Naive thymus-derived CD4-positive, alpha-beta T cell (primary cell): ENCODE measurements at regions of chr17 and their contacts with region 1.

Region 1: GRCh38 chr17:76141212-76142038 is at the start of gene FOXJ1:
- DNase-seq: peak; percentile 88 to 94 (median 91)
- ATAC-seq: peak; percentile 87
- H3K4me3 ChIP-seq: peak within 1 kb of the TSS; percentile 49
- H3K4me3 Mint-ChIP-seq: peak within 1 kb of the TSS; percentile 82 to 89 (median 85)
- H3K27ac ChIP-seq: peak within 1 kb of the TSS; percentile 61
- H3K27ac Mint-ChIP-seq: peak within 1 kb of the TSS; percentile 80 to 99 (median 93)
- H3K4me1 ChIP-seq: peaks cover 50 to 58% of the 10 kb centered on the region in 2 donors
- H3K4me1 Mint-ChIP-seq: peaks cover 42 to 63% (median 59%) of the 10 kb centered on the region in 7 donors
- H3K27me3 ChIP-seq: no peaks in the 10 kb centered on the region
- H3K27me3 Mint-ChIP-seq: peaks cover 0 to 26% (median 0%) of the 10 kb centered on the region in 5 donors
- total RNA-seq, gene FOXJ1: 0.29 to 2.2 (median 1.4) TPM

Region 2: DNA sequence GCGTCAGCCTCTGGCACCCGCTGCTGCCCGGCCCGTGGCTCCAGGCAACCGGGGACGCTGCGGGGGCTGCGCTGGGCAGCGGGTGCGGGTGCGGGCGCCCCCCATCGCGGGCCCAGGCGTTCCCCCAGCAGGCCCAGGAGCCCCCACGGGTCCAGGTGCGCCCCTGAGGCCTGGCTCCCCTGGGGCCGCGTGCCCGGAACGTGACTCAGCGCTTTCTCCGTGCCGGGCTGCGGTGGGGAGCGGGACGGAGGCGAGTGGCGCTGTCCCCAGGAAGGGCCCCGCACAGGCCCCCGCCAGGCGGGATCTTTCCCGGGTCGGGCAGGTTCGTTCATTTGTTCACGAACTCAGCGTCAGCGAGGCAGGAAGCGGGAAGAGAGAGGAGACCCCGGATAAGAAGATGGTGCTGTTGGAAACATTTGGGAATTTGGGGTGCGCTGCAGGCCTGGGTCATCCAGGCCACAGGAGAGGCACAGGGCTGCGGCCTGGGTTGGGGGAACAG is 19.4 kb before region 1 on chr17:
- CTCF ChIA-PET with region 1: interaction called, 5 read pairs
- POLR2A ChIA-PET with region 1: interaction called, 51 read pairs
- intact Hi-C with region 1: loop called in 1 of 2 experiments (anchors 1 kb)
- DNase-seq: no peak
- ATAC-seq: peak; percentile 33
- H3K4me3 ChIP-seq: peak overlapping the region; percentile 63
- H3K4me3 Mint-ChIP-seq: peak overlapping the region in 7 of 10 donors; percentile 25 to 77 (median 53)
- H3K27ac ChIP-seq: peak overlapping the region; percentile 52
- H3K27ac Mint-ChIP-seq: peak overlapping the region; percentile 40 to 91 (median 73)
- H3K4me1 ChIP-seq: peaks cover 0 to 25% of the 10 kb centered on the region in 2 donors
- H3K4me1 Mint-ChIP-seq: peaks cover 10 to 39% (median 27%) of the 10 kb centered on the region in 7 donors
- H3K27me3 ChIP-seq: no peaks in the 10 kb centered on the region
- H3K27me3 Mint-ChIP-seq: no peaks in the 10 kb centered on the region

Region 3: DNA sequence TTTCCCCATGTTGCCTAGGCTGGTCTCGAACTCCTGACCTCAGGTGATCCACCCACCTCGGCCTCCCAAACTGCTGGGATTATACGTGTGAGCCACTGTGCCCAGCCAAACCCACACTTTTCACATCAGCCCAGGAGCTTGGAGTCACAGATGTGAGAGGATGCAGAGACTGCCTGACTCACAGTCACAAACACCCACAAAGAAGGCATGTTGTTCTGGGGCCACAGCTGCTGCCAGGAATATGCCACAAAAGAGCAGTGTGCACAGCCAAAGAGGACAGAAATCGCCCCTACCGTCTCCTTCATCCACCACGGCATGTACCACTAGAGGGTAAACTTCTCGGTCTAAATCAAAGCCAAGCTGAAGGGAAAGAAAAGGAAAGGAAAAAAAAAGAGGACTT is 24.7 kb after region 1 on chr17:
- CTCF ChIA-PET with region 1: interaction called, 4 read pairs
- POLR2A ChIA-PET with region 1: interaction called, 11 read pairs
- intact Hi-C with region 1: no loop called
- DNase-seq: no peak
- ATAC-seq: no peak
- H3K4me3 ChIP-seq: no peak overlapping the region
- H3K4me3 Mint-ChIP-seq: peak overlapping the region in 1 of 10 donors; percentile 30
- H3K27ac ChIP-seq: no peak overlapping the region
- H3K27ac Mint-ChIP-seq: peak overlapping the region in 6 of 9 donors; percentile 14 to 55 (median 39)
- H3K4me1 ChIP-seq: no peaks in the 10 kb centered on the region
- H3K4me1 Mint-ChIP-seq: peaks cover 7 to 36% (median 24%) of the 10 kb centered on the region in 7 donors
- H3K27me3 ChIP-seq: no peaks in the 10 kb centered on the region
- H3K27me3 Mint-ChIP-seq: no peaks in the 10 kb centered on the region

Region 4: DNA sequence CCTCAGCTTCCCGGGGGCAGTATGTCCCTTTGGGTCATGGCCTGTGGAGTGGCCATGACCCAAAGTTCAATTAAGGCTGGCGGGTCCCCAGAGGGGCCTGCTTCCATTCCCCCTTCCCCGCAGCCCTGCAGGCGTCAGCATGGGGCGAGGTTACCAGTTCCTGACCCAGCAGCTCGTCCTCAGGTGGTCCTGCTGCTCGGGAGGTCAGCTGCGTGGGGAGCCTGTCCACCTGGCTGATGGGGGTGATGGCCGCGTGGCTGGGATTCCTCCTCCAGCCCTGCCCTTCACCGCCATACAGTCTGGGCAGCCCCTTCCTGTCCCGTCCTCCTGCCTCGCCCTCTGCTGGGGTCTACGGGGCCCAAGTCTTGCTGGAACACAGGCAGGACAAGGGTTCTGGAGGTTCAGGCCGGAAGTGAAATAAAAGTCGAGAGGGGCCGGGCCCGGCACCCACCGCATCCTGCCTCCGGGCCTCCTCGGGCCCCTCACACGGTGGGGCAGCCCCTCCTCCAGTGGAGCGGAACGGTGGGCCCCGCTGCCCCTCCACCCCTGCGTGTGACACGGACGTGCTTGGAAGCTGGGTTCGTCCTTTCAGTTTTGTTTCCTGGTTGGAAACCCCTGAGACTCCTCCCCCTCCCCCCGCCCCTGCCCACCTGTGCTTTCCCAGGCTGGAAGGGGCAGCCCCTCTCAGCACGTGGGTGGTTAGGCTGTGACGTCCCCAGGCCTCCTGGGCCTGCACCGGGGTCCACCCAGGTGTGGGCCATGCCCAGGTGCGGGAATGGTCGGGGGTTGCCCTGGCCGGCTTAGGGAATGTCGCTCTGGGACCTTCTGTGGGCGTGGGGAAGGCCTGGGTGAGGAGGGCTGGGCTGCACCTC is 130.5 kb after region 1 on chr17:
- CTCF ChIA-PET with region 1: interaction called, 5 read pairs
- POLR2A ChIA-PET with region 1: interaction called, 23 read pairs
- intact Hi-C with region 1: no loop called
- DNase-seq: peak in 6 of 9 donors; percentile 53 to 79 (median 61)
- ATAC-seq: peak; percentile 54
- H3K4me3 ChIP-seq: peak overlapping the region; percentile 68
- H3K4me3 Mint-ChIP-seq: peak overlapping the region; percentile 75 to 93 (median 82)
- H3K27ac ChIP-seq: peak overlapping the region; percentile 92
- H3K27ac Mint-ChIP-seq: peak overlapping the region; percentile 82 to 94 (median 92)
- H3K4me1 ChIP-seq: peaks cover 65 to 70% of the 10 kb centered on the region in 2 donors
- H3K4me1 Mint-ChIP-seq: peaks cover 37 to 75% (median 71%) of the 10 kb centered on the region in 7 donors
- H3K27me3 ChIP-seq: no peaks in the 10 kb centered on the region
- H3K27me3 Mint-ChIP-seq: peaks cover 0 to 3% (median 0%) of the 10 kb centered on the region in 5 donors

Region 5: DNA sequence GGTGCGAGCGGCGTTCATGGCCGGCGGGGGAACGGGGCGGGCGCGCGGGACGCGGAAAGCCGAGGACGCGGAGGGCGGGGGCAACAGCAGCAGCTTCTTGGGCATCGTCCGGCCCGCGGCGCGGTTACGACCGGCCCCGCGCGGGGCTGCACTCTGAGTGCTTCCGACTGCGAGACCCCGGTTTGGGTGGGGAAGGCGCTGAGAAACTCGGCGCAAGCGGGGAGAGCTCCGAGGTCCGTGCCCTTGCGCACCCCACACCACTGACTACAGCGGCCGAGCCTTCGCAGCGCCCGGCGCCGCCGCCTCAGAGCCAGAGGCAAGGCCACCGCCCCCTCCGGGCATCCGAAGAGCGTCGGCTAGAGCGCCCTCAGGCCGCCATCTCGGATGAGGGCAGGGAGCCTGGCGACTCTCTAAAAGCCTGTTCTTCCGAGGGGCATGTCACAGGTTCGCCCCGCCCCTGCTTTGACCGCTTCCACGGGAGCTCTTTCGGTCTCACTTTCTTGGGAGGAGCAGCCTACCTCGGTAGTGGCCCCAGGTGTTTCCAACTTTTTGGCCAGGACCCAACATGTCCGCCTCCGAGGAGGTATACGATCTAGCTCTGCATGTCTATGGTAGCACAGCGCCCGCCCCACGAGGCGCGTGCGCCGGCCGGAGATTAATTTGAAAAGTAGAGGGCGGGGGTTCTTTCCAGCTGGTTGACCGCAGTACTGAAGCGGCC is 212.3 kb after region 1 on chr17 and contains the start of gene PRPSAP1:
- CTCF ChIA-PET with region 1: no interaction called
- POLR2A ChIA-PET with region 1: no interaction called
- intact Hi-C with region 1: loop called in 1 of 2 experiments (anchors 1 kb)
- DNase-seq: peak; percentile 76 to 89 (median 82)
- ATAC-seq: peak; percentile 98
- H3K4me3 ChIP-seq: peak within 1 kb of the TSS; percentile 97
- H3K4me3 Mint-ChIP-seq: peak within 1 kb of the TSS; percentile 89 to 99 (median 94)
- H3K27ac ChIP-seq: peak within 1 kb of the TSS; percentile 81
- H3K27ac Mint-ChIP-seq: peak within 1 kb of the TSS; percentile 91 to 100 (median 96)
- H3K4me1 ChIP-seq: no peaks in the 10 kb centered on the region
- H3K4me1 Mint-ChIP-seq: peaks cover 13 to 35% (median 19%) of the 10 kb centered on the region in 7 donors
- H3K27me3 ChIP-seq: no peaks in the 10 kb centered on the region
- H3K27me3 Mint-ChIP-seq: no peaks in the 10 kb centered on the region
- total RNA-seq, gene PRPSAP1: 19.6 to 55.9 (median 45.8) TPM